Activated CD4-positive, alpha-beta T cell treated with anti-CD3 and anti-CD28 coated beads for 36 hours (primary cell): ENCODE measurements at regions of chr3 and their contacts with region 1.

Region 1: GRCh38 chr3:100708967-100709841 is at the start of gene TFG:
- DNase-seq: peak; percentile 98
- ATAC-seq: peak; percentile 91
- H3K4me3 Mint-ChIP-seq: peak within 1 kb of the TSS; percentile 79
- H3K27ac Mint-ChIP-seq: peak within 1 kb of the TSS; percentile 98
- H3K4me1 Mint-ChIP-seq: peaks cover 45% of the 10 kb centered on the region
- H3K27me3 Mint-ChIP-seq: no peaks in the 10 kb centered on the region
- total RNA-seq, gene TFG: 61.4 to 79.8 TPM

Region 2: DNA sequence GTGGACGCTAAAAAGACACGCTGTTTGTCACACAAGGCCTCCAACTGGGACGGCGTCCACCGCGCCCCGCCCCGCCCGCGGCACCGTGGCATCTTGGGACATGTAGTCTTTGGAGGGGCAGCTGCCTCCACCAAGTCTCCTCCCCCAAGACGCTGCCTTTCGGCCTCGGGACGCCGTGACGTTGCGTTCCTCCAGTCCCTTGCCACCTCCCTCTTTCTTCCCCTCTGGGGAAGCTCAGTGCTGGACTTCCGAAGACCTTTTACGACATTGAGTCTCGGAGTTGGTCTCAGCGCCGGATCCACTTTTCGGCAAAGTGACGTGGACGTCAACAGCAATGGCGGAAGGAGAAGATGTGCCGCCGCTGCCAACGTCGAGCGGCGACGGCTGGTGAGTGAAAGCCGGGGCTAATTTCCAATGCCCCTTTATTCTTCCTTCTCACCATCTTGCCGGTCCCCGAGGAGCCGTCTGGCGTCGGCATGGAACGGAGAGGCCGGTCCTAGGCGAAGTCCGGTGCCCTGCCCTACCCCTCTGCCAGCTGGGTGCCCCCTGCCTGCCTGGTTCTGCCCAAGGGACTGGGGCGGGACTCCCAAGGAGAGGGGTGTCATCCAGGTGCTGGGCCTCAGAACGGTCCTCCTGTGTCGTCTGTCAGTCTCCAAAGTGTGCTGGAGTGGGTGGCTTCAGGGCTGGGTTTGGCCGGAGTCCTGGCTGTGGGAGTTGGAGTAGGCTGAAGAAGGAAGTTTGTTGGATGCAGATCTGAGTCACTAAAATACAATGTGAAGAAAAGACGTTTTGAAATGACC is 448.3 kb before region 1 on chr3 and contains the start of gene TBC1D23:
- CTCF ChIA-PET with region 1: no interaction called
- POLR2A ChIA-PET with region 1: no interaction called
- intact Hi-C with region 1: loop called (anchors 1 kb)
- DNase-seq: peak; percentile 98
- ATAC-seq: peak; percentile 100
- H3K4me3 Mint-ChIP-seq: peak within 1 kb of the TSS; percentile 91
- H3K27ac Mint-ChIP-seq: peak within 1 kb of the TSS; percentile 96
- H3K4me1 Mint-ChIP-seq: peaks cover 58% of the 10 kb centered on the region
- H3K27me3 Mint-ChIP-seq: no peaks in the 10 kb centered on the region
- total RNA-seq, gene TBC1D23: 17.6 to 19.4 TPM

Region 3: GRCh38 chr3:100334488-100335351 is 374.5 kb before region 1 on chr3 and contains the start of gene NIT2:
- CTCF ChIA-PET with region 1: no interaction called
- POLR2A ChIA-PET with region 1: no interaction called
- intact Hi-C with region 1: loop called in 1 of 2 experiments (anchors 1 kb)
- DNase-seq: peak; percentile 90
- ATAC-seq: peak; percentile 98
- H3K4me3 Mint-ChIP-seq: peak within 1 kb of the TSS; percentile 92
- H3K27ac Mint-ChIP-seq: peak within 1 kb of the TSS; percentile 96
- H3K4me1 Mint-ChIP-seq: peaks cover 24% of the 10 kb centered on the region
- H3K27me3 Mint-ChIP-seq: no peaks in the 10 kb centered on the region
- total RNA-seq, gene NIT2: 59.1 to 70.8 TPM

Region 4: GRCh38 chr3:100603469-100603868 is 105.7 kb before region 1 on chr3:
- CTCF ChIA-PET with region 1: interaction called, 3 read pairs
- POLR2A ChIA-PET with region 1: interaction called, 3 read pairs
- intact Hi-C with region 1: loop called in 1 of 2 experiments (anchors 5 kb)
- DNase-seq: no peak
- ATAC-seq: peak; percentile 62
- H3K4me3 Mint-ChIP-seq: peak overlapping the region; percentile 40
- H3K27ac Mint-ChIP-seq: no peak overlapping the region
- H3K4me1 Mint-ChIP-seq: peaks cover 18% of the 10 kb centered on the region
- H3K27me3 Mint-ChIP-seq: no peaks in the 10 kb centered on the region

Region 5: DNA sequence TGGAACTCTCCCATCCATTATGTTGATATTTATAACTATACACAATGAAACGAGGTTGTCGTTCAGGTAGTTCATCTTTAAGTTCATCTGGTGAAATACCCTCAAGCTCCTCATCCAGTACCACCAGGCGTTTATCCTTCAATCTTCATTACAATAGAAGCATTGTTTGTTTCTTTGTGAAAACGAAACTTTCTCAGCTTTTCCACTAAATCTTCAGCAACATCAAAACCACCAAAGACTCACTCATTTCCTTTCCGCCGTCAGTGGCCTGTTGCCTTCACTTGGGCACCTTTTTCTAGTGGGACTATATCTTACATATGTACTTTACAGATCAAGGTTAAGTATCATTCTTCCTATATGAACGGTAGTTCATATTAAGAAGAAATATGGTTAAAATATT is 44.0 kb before region 1 on chr3:
- CTCF ChIA-PET with region 1: no interaction called
- POLR2A ChIA-PET with region 1: interaction called, 11 read pairs
- intact Hi-C with region 1: loop called (anchors 1 to 2 kb)
- DNase-seq: peak; percentile 57
- ATAC-seq: peak; percentile 92
- H3K4me3 Mint-ChIP-seq: no peak overlapping the region
- H3K27ac Mint-ChIP-seq: peak overlapping the region; percentile 38
- H3K4me1 Mint-ChIP-seq: peaks cover 25% of the 10 kb centered on the region
- H3K27me3 Mint-ChIP-seq: peaks cover 3% of the 10 kb centered on the region

Region 6: GRCh38 chr3:101676765-101677435 is 967.7 kb after region 1 on chr3 and contains the start of gene ZBTB11:
- CTCF ChIA-PET with region 1: interaction called, 3 read pairs
- POLR2A ChIA-PET with region 1: no interaction called
- intact Hi-C with region 1: loop called in 1 of 2 experiments (anchors 1 kb)
- DNase-seq: peak; percentile 100
- ATAC-seq: peak; percentile 78
- H3K4me3 Mint-ChIP-seq: peak within 1 kb of the TSS; percentile 94
- H3K27ac Mint-ChIP-seq: peak within 1 kb of the TSS; percentile 92
- H3K4me1 Mint-ChIP-seq: peaks cover 52% of the 10 kb centered on the region
- H3K27me3 Mint-ChIP-seq: no peaks in the 10 kb centered on the region
- total RNA-seq, gene ZBTB11: 25.1 to 26.0 TPM